ENCODE measurements at regions of chr10 and their contacts with region 1.

Region 1: GRCh38 chr10:124719213-124719851 is 24.8 kb downstream of the FAM53B start:
- DNase-seq: peak; percentile 90
- ATAC-seq: peak; percentile 48
- H3K4me3 ChIP-seq: peak overlapping the region in 3 of 5 experiments; percentile 17 to 37 (median 33)
- H3K4me3 Mint-ChIP-seq: peak overlapping the region; percentile 82
- H3K27ac ChIP-seq: peak overlapping the region; percentile 92 to 98
- H3K27ac Mint-ChIP-seq: peak overlapping the region; percentile 85
- H3K4me1 ChIP-seq: peaks cover 97% of the 10 kb centered on the region in 2 donors
- H3K4me1 Mint-ChIP-seq: peaks cover 91% of the 10 kb centered on the region
- H3K27me3 ChIP-seq: no peaks in the 10 kb centered on the region
- H3K27me3 Mint-ChIP-seq: no peaks in the 10 kb centered on the region
- CTCF ChIP-seq: peak; percentile 77

Region 2: DNA sequence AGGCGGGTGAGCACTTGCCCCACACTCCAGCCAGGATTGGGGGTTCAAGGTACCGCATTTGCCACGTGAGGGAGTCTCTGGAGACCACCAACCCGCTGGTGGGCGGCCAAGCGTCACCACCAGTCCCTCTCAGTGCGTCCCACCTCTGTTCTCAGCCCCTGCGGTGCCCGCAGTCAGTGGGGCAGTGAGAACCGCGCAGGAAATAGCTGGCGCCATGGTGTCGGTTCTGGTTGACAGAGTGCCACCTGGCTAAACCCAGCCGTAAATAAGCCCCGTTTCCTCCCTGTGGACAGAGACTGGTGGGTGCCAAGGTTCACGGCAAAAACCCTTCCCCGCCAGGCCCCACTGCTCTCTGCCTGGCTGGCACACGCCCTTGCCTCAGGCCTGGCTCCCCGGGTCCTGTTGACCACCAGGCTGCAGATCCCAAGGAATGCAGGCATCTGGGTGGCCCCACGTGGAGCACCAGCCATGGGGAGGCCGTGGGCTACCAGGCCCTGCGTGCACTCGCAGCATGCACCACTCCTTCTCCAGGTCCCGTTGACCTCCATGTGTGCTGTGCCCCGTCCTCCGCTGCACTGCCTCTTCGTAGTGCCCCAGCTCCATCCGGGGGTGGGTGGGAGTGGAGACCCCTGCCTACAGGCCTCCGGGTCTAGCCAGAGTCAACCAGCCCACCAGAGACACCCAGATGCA is 117.8 kb before region 1 on chr10:
- CTCF ChIA-PET with region 1: interaction called, 3 read pairs
- POLR2A ChIA-PET with region 1: interaction called, 12 read pairs
- intact Hi-C with region 1: loop called (anchors 1 kb)
- DNase-seq: peak; percentile 96
- ATAC-seq: peak; percentile 85
- H3K4me3 ChIP-seq: peak overlapping the region in 2 of 5 experiments; percentile 5 to 18
- H3K4me3 Mint-ChIP-seq: peak overlapping the region; percentile 52
- H3K27ac ChIP-seq: peak overlapping the region; percentile 90 to 99
- H3K27ac Mint-ChIP-seq: peak overlapping the region; percentile 99
- H3K4me1 ChIP-seq: peaks cover 98 to 100% of the 10 kb centered on the region in 2 donors
- H3K4me1 Mint-ChIP-seq: peaks cover 94% of the 10 kb centered on the region
- H3K27me3 ChIP-seq: no peaks in the 10 kb centered on the region
- H3K27me3 Mint-ChIP-seq: no peaks in the 10 kb centered on the region
- CTCF ChIP-seq: no peak

Region 3: DNA sequence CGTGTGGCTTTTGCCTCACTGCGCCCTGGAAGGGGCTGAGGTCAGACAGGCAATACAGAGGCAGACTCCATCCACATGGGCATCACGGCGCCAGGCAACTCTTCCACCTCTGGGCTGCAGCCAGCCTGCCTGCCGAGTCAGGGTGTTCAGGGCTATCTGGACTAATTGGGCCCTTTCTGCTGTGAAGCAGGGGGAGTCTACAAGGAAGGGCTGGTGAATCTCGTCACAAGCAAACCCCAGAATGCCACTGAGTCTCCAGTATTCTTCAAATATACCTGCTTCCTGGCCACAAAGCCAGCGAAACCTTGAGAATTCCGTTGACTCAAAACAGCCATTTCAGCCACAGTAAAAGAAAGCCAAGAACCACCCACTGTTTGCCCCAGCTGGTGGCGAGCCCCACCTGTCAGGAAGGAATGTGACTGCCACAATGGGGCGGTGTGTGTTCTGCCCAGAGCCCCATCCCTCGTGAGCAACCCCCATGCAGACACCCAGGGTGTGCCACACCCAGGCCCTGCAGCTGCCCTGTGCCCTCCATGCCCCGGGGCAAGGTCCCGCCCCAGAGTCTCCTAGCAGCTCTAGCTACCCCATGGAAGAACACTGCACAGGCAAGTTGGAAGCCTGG is 92.5 kb before region 1 on chr10:
- CTCF ChIA-PET with region 1: interaction called, 25 read pairs
- POLR2A ChIA-PET with region 1: interaction called, 4 read pairs
- intact Hi-C with region 1: no loop called
- DNase-seq: peak; percentile 82
- ATAC-seq: peak; percentile 81
- H3K4me3 ChIP-seq: peak overlapping the region in 1 of 5 experiments; percentile 30
- H3K4me3 Mint-ChIP-seq: peak overlapping the region; percentile 62
- H3K27ac ChIP-seq: peak overlapping the region; percentile 83 to 97
- H3K27ac Mint-ChIP-seq: peak overlapping the region; percentile 99
- H3K4me1 ChIP-seq: peaks cover 100% of the 10 kb centered on the region in 2 donors
- H3K4me1 Mint-ChIP-seq: peaks cover 94% of the 10 kb centered on the region
- H3K27me3 ChIP-seq: no peaks in the 10 kb centered on the region
- H3K27me3 Mint-ChIP-seq: no peaks in the 10 kb centered on the region
- CTCF ChIP-seq: peak; percentile 16

Region 4: DNA sequence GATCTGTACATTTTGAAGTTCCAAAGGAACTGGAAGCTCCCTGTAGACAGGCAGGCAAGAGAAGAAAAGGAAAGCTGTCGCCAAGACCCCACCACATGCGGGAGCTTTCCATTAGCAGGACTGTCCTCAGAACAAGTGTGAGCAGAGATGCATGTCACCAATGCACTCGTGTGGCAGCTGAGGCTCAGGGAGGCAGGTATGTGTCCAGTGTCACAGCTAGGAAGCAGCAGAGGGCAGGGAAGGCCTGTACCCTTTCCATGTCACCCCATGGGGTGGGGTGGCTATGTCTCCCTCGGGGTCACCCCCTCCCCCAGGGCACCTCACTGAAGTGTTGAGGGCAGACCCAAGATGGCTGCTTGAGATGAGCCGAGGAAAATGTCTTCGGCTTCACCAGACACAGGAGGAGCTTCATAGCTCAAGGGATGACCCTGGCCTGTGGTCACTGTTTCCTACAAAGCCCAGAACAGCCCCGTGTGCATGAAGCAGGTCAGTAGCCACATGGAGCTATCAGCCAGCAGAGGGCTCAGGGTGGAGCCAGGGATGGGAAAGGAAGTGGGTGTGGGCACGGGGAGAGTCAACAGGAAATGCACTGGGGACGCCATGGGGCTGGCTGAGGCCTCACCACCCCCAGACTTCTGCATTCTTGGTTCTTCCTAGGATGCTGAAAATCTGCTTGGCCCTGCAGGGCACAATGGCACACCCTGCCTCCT is 71.8 kb before region 1 on chr10:
- CTCF ChIA-PET with region 1: interaction called, 58 read pairs
- POLR2A ChIA-PET with region 1: interaction called, 3 read pairs
- intact Hi-C with region 1: no loop called
- DNase-seq: peak; percentile 80
- ATAC-seq: peak; percentile 78
- H3K4me3 ChIP-seq: peak overlapping the region in 4 of 5 experiments; percentile 15 to 45 (median 26)
- H3K4me3 Mint-ChIP-seq: peak overlapping the region; percentile 85
- H3K27ac ChIP-seq: peak overlapping the region; percentile 71 to 92
- H3K27ac Mint-ChIP-seq: peak overlapping the region; percentile 97
- H3K4me1 ChIP-seq: peaks cover 99 to 100% of the 10 kb centered on the region in 2 donors
- H3K4me1 Mint-ChIP-seq: peaks cover 99% of the 10 kb centered on the region
- H3K27me3 ChIP-seq: no peaks in the 10 kb centered on the region
- H3K27me3 Mint-ChIP-seq: no peaks in the 10 kb centered on the region
- CTCF ChIP-seq: peak; percentile 25

Region 5: DNA sequence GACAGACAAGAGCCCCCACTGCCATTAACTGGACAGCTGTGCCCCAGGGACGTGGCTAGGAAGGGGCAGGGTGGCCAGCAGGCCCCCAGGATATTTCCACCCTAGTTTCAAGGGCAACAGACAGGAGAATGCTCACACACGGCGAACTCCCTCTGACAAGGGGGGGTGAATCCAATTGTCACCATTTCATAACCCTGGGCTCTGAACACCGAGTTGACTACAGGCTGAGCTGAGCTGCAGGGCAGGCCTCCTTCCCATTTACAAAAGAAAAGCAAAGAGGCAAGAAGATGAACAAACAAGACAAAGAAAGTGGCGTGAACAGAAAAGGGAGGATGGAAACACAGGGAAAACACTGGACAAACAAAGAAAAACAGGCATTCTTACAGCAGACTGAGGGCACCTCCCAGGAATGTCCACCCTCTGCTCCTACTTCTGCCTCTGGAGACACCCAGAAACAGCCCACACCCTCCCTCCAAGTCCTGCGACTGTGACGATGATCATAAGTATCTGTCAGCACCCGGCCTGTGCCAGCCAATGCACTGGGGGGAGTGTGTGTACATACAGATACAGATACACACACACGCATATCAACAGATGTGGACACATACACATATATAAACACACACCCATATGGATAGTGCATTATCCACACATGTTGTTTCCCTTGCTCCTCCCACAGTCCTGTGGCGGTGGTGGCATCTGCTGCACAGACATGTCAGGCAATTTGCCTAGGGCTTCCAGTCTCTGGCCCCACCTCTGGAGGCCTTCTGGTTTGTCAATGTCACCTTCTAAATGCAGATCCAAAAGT is 41.4 kb before region 1 on chr10:
- CTCF ChIA-PET with region 1: interaction called, 10 read pairs
- POLR2A ChIA-PET with region 1: no interaction called
- intact Hi-C with region 1: no loop called
- DNase-seq: no peak
- ATAC-seq: no peak
- H3K4me3 ChIP-seq: no peak overlapping the region
- H3K4me3 Mint-ChIP-seq: no peak overlapping the region
- H3K27ac ChIP-seq: peak overlapping the region in 1 of 2 donors; percentile 57
- H3K27ac Mint-ChIP-seq: peak overlapping the region; percentile 46
- H3K4me1 ChIP-seq: peaks cover 33 to 78% of the 10 kb centered on the region in 2 donors
- H3K4me1 Mint-ChIP-seq: peaks cover 75% of the 10 kb centered on the region
- H3K27me3 ChIP-seq: no peaks in the 10 kb centered on the region
- H3K27me3 Mint-ChIP-seq: no peaks in the 10 kb centered on the region
- CTCF ChIP-seq: no peak

Region 6: GRCh38 chr10:124697830-124698544 is 21.3 kb before region 1 on chr10:
- CTCF ChIA-PET with region 1: interaction called, 36 read pairs
- POLR2A ChIA-PET with region 1: interaction called, 17 read pairs
- intact Hi-C with region 1: loop called (anchors 1 kb)
- DNase-seq: peak; percentile 73
- ATAC-seq: peak; percentile 40
- H3K4me3 ChIP-seq: peak overlapping the region in 1 of 5 experiments; percentile 7
- H3K4me3 Mint-ChIP-seq: peak overlapping the region; percentile 86
- H3K27ac ChIP-seq: peak overlapping the region; percentile 80 to 91
- H3K27ac Mint-ChIP-seq: peak overlapping the region; percentile 97
- H3K4me1 ChIP-seq: peaks cover 88 to 93% of the 10 kb centered on the region in 2 donors
- H3K4me1 Mint-ChIP-seq: peaks cover 96% of the 10 kb centered on the region
- H3K27me3 ChIP-seq: no peaks in the 10 kb centered on the region
- H3K27me3 Mint-ChIP-seq: no peaks in the 10 kb centered on the region
- CTCF ChIP-seq: no peak

Region 7: DNA sequence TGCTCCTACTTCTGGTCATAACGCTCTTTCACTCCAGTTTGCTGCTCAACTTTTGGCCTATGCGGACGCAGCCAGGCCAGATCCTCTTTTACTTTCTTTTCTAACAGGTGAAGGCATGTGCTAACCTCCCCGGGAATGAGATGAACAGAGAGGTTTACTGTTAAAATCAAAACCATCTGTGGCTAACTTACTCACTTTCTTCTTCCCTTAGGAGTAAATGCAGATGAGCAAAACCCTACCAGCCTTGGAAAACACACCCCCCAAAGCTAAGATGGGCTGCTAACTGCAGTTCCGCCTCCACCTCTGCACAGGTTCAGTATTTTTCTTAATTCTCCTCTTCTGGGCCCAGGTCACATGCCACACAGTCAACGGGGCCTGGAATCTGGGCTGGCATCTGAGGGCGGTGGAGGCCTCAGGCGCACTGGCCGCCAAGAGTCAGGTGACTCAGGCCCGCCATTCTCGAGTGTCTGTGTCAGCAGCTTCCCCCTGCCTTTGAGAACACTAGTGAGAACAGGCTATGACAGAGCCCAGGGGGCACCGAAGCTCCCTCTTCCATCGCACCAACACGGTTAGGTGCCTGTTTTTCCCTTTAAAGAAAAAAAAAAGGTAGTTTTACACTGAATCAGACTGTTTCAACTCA is 13.7 kb after region 1 on chr10:
- CTCF ChIA-PET with region 1: interaction called, 353 read pairs
- POLR2A ChIA-PET with region 1: interaction called, 32 read pairs
- intact Hi-C with region 1: loop called (anchors 1 kb)
- DNase-seq: peak; percentile 61
- ATAC-seq: peak; percentile 34
- H3K4me3 ChIP-seq: peak overlapping the region in 2 of 5 experiments; percentile 13 to 39
- H3K4me3 Mint-ChIP-seq: peak overlapping the region; percentile 52
- H3K27ac ChIP-seq: peak overlapping the region; percentile 80 to 98
- H3K27ac Mint-ChIP-seq: peak overlapping the region; percentile 79
- H3K4me1 ChIP-seq: peaks cover 99 to 100% of the 10 kb centered on the region in 2 donors
- H3K4me1 Mint-ChIP-seq: peaks cover 97% of the 10 kb centered on the region
- H3K27me3 ChIP-seq: no peaks in the 10 kb centered on the region
- H3K27me3 Mint-ChIP-seq: no peaks in the 10 kb centered on the region
- CTCF ChIP-seq: no peak